Activated naive CD4-positive, alpha-beta T cell treated with anti-CD3 and anti-CD28 coated beads for 36 hours (primary cell): ENCODE measurements at regions of chr3 and their contacts with region 1.

Region 1: GRCh38 chr3:98536456-98537017 is 4.8 kb downstream of the GPR15 start:
- DNase-seq: peak; percentile 14
- H3K4me3 Mint-ChIP-seq: peak overlapping the region; percentile 21
- H3K27ac Mint-ChIP-seq: peak overlapping the region; percentile 50
- H3K4me1 Mint-ChIP-seq: peaks cover 24% of the 10 kb centered on the region
- H3K27me3 Mint-ChIP-seq: peaks cover 6% of the 10 kb centered on the region

Region 2: GRCh38 chr3:98130421-98130820 is 406.1 kb before region 1 on chr3 and contains the start of gene OR5H1:
- CTCF ChIA-PET with region 1: no interaction called
- intact Hi-C with region 1: no loop called
- DNase-seq: no peak
- H3K4me3 Mint-ChIP-seq: no peak within 1 kb of the TSS
- H3K27ac Mint-ChIP-seq: no peak within 1 kb of the TSS
- H3K4me1 Mint-ChIP-seq: no peaks in the 10 kb centered on the region
- H3K27me3 Mint-ChIP-seq: no peaks in the 10 kb centered on the region
- total RNA-seq, gene OR5H1: not detected

Region 3: GRCh38 chr3:98500039-98500438 is 36.5 kb before region 1 on chr3:
- CTCF ChIA-PET with region 1: no interaction called
- intact Hi-C with region 1: no loop called
- DNase-seq: no peak
- H3K4me3 Mint-ChIP-seq: no peak overlapping the region
- H3K27ac Mint-ChIP-seq: no peak overlapping the region
- H3K4me1 Mint-ChIP-seq: no peaks in the 10 kb centered on the region
- H3K27me3 Mint-ChIP-seq: no peaks in the 10 kb centered on the region

Region 4: GRCh38 chr3:98564282-98565005 is 27.9 kb after region 1 on chr3:
- CTCF ChIA-PET with region 1: interaction called, 12 read pairs
- intact Hi-C with region 1: loop called (anchors 1 kb)
- DNase-seq: no peak
- H3K4me3 Mint-ChIP-seq: no peak overlapping the region
- H3K27ac Mint-ChIP-seq: no peak overlapping the region
- H3K4me1 Mint-ChIP-seq: peaks cover 63% of the 10 kb centered on the region
- H3K27me3 Mint-ChIP-seq: no peaks in the 10 kb centered on the region

Region 5: DNA sequence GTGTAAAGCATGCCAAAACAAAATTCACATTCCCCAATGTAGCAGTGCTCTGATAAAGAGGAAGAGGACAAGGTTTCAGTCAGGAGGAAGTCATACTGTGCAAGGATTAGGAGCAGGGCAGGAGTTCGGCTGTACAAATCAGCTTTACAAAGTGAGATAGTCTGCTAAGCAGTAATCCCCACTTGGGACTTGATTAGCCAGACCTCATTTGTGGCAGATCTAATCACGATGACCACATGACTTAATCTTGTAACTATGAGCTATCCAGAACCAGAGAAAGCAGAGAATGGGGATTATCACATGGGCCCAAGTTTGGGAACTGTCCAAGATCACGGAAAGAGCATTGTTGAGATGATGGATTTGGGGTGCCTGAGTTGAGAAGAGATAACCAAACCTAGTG is 357.2 kb after region 1 on chr3:
- CTCF ChIA-PET with region 1: no interaction called
- intact Hi-C with region 1: no loop called
- DNase-seq: no peak
- H3K4me3 Mint-ChIP-seq: no peak overlapping the region
- H3K27ac Mint-ChIP-seq: no peak overlapping the region
- H3K4me1 Mint-ChIP-seq: no peaks in the 10 kb centered on the region
- H3K27me3 Mint-ChIP-seq: no peaks in the 10 kb centered on the region